Activated naive CD8-positive, alpha-beta T cell treated with anti-CD3 and anti-CD28 coated beads, Interleukin-2, amount 10 ng/mL, durations not matched to agents 7 days and 5 days (primary cell): ENCODE measurements at regions of chr6 and their contacts with region 1.

Region 1: DNA sequence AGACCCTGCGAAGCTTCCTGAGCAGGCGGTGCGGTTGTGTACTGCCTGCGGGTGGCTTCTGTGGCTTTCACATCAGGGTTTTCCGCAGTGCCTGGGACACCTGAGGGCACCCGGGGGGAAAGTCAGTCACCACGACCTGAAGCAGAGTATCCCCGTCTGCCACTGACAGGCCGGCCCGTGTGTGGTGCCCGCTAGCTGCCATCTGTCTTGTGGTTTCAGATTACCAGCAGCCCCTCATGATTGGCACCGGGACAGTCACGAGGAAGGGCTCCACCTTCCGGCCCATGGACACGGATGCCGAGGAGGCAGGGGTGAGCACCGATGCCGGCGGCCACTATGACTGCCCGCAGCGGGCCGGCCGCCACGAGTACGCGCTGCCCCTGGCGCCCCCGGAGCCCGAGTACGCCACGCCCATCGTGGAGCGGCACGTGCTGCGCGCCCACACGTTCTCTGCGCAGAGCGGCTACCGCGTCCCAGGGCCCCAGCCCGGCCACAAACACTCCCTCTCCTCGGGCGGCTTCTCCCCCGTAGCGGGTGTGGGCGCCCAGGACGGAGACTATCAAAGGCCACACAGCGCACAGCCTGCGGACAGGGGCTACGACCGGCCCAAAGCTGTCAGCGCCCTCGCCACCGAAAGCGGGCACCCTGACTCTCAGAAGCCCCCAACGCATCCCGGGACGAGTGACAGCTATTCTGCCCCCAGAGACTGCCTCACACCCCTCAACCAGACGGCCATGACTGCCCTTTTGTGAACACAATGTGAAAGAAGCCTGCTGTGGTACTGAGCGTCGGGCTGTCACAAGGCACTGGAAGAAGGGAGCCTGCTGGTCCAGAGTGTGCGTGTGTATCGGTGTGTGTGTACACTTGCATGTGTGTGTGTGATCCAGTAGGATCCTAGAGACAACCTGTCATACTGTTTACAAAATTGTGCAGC is 54.4 kb downstream of the GOPC start:
- DNase-seq: peak; percentile 62
- ATAC-seq: peak; percentile 48
- H3K4me3 Mint-ChIP-seq: peak overlapping the region; percentile 83
- H3K27ac Mint-ChIP-seq: peak overlapping the region; percentile 84
- H3K4me1 Mint-ChIP-seq: peaks cover 37% of the 10 kb centered on the region
- H3K27me3 Mint-ChIP-seq: peaks cover 2% of the 10 kb centered on the region

Region 2: GRCh38 chr6:117482240-117483003 is 65.5 kb before region 1 on chr6 and contains the start of gene DCBLD1:
- POLR2A ChIA-PET with region 1: interaction called, 32 read pairs
- DNase-seq: peak; percentile 74
- ATAC-seq: peak; percentile 82
- H3K4me3 Mint-ChIP-seq: peak within 1 kb of the TSS; percentile 91
- H3K27ac Mint-ChIP-seq: peak within 1 kb of the TSS; percentile 81
- H3K4me1 Mint-ChIP-seq: peaks cover 20% of the 10 kb centered on the region
- H3K27me3 Mint-ChIP-seq: peaks cover 41% of the 10 kb centered on the region
- total RNA-seq, gene DCBLD1: 5.6 to 6.2 TPM

Region 3: GRCh38 chr6:117890172-117890571 is 342.2 kb after region 1 on chr6:
- POLR2A ChIA-PET with region 1: no interaction called
- DNase-seq: no peak
- ATAC-seq: no peak
- H3K4me3 Mint-ChIP-seq: no peak overlapping the region
- H3K27ac Mint-ChIP-seq: no peak overlapping the region
- H3K4me1 Mint-ChIP-seq: no peaks in the 10 kb centered on the region
- H3K27me3 Mint-ChIP-seq: no peaks in the 10 kb centered on the region